ENCODE measurements at regions of chr4 and their contacts with region 1.

Region 1: GRCh38 chr4:110516106-110516922 is 40.4 kb downstream of the ENPEP start:
- DNase-seq: peak; percentile 68
- ATAC-seq: peak; percentile 100
- H3K4me3 ChIP-seq: peak overlapping the region; percentile 44 to 58 (median 50)
- H3K27ac ChIP-seq: no peak overlapping the region
- H3K4me1 ChIP-seq: peaks cover 8% of the 10 kb centered on the region; the same call in 1 of the 2 replicates
- H3K27me3 ChIP-seq: no peaks in the 10 kb centered on the region
- CTCF ChIP-seq: peak; percentile 84
- EP300 ChIP-seq: no peak
- POLR2A ChIP-seq: no peak
- RAD21 ChIP-seq: peak; percentile 53; the same call in 1 of the 2 replicates

Region 2: DNA sequence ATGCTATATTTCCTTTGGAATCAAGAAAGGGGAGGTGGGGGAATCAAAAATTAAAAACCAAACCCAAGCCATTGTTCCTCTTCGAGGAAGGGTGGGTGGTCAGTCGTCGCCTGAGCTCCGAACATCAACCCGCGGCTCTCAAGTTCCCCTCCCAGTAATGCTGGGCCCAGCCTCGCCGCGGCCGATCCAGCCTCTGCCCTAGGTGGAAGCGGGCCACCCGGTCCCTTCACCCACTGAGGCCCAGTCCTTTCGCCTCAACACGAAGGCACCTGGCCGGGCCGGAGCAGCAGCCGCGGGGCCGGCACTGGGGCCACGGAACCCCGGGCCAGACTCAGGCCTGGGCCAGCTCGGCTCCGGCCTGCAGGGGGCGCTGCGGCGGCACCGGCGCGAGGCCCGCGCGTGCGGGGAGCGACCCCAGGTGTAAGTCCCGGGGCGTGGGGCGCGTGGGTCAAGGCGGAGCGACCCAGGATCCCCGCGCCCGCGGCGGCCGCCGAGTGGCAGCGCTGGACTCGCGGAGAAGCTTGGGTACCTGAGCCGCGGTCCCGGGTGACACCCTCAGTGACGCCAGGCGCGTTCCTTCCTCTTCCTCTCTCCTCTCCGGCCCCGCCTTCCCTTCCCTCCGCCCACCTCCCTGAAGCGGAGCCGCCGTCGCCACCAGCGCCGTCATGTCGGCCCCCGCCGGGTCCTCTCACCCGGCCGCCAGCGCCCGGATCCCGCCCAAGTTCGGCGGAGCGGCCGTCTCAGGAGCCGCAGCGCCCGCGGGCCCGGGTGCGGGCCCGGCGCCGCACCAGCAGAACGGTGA is 1082.9 kb before region 1 on chr4 and contains the start of gene SEC24B:
- CTCF ChIA-PET with region 1: no interaction called
- POLR2A ChIA-PET with region 1: no interaction called
- in situ Hi-C with region 1: no loop called
- intact Hi-C with region 1: loop called (anchors 10 kb)
- DNase-seq: peak; percentile 73
- ATAC-seq: peak; percentile 92
- H3K4me3 ChIP-seq: peak within 1 kb of the TSS; percentile 81 to 93 (median 86)
- H3K27ac ChIP-seq: peak within 1 kb of the TSS; percentile 81
- H3K4me1 ChIP-seq: peaks cover 43% of the 10 kb centered on the region
- H3K27me3 ChIP-seq: no peaks in the 10 kb centered on the region; a peak in 1 of 5 replicates
- CTCF ChIP-seq: peak; percentile 73
- EP300 ChIP-seq: no peak
- POLR2A ChIP-seq: peak; percentile 69 to 77
- RAD21 ChIP-seq: peak; percentile 86
- total RNA-seq, gene SEC24B: 14.6 and 22.9 TPM in 2 replicates

Region 3: DNA sequence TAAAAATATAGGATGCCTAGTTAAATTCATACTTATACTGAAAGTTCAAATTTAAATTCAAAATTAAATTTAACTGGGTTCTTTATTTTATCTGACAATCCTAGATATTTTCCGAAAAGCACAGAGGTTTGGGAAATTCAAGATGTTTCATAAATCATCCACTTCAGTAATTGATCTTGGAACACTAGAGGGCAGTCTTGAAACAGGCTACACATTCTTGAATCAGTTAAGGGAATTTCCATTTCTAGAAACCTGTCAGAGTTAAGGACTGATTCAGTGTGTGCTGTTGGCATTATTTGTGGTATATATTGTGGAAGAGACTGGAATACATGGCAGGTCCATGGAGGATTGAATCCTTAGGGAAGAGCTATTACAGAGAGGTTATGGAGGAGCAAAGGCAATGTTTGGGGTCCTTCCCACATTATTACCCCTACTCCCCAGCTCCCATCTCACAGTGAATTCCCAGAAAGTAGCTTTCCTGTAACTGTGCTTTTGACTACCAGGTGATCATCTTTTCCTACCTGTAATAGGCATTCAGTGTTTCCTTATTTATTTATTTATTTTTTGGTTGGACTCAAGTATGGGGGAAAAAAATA is 510.8 kb before region 1 on chr4:
- CTCF ChIA-PET with region 1: interaction called, 100 read pairs
- POLR2A ChIA-PET with region 1: no interaction called
- in situ Hi-C with region 1: loop called (anchors 5 kb)
- intact Hi-C with region 1: loop called (anchors 1 kb)
- DNase-seq: peak; percentile 60
- ATAC-seq: peak; percentile 50
- H3K4me3 ChIP-seq: no peak overlapping the region
- H3K27ac ChIP-seq: no peak overlapping the region
- H3K4me1 ChIP-seq: peaks cover 29% of the 10 kb centered on the region
- H3K27me3 ChIP-seq: no peaks in the 10 kb centered on the region
- CTCF ChIP-seq: peak; percentile 77
- EP300 ChIP-seq: no peak
- POLR2A ChIP-seq: no peak
- RAD21 ChIP-seq: peak; percentile 45; the same call in 1 of the 2 replicates

Region 4: GRCh38 chr4:110310795-110311194 is 205.5 kb before region 1 on chr4:
- CTCF ChIA-PET with region 1: interaction called, 4 read pairs
- POLR2A ChIA-PET with region 1: no interaction called
- in situ Hi-C with region 1: no loop called
- intact Hi-C with region 1: loop called (anchors 1 kb)
- DNase-seq: no peak
- ATAC-seq: no peak
- H3K4me3 ChIP-seq: no peak overlapping the region
- H3K27ac ChIP-seq: no peak overlapping the region
- H3K4me1 ChIP-seq: no peaks in the 10 kb centered on the region
- H3K27me3 ChIP-seq: no peaks in the 10 kb centered on the region
- CTCF ChIP-seq: no peak
- EP300 ChIP-seq: no peak
- POLR2A ChIP-seq: no peak
- RAD21 ChIP-seq: no peak

Region 5: DNA sequence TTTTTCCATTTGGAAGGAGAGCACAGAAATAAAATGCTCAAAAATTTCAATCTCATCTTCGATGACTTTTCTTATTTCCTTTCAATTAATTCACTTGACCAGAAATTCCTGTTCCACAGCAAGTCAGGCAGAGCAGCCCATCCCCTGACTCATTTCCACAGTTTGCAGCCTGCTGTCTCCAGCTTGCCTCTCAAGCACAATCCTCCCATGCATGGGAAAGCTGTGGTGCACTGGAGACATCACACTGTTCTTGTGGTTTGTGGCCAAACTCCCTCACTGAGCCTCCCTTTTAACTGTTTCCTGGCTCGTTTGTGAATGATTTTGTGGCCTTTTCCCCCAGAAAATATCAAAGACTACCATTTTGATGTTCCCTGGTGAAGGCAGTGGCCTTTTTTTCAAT is 154.4 kb before region 1 on chr4:
- CTCF ChIA-PET with region 1: no interaction called
- POLR2A ChIA-PET with region 1: no interaction called
- in situ Hi-C with region 1: no loop called
- intact Hi-C with region 1: no loop called
- DNase-seq: no peak
- ATAC-seq: no peak
- H3K4me3 ChIP-seq: no peak overlapping the region
- H3K27ac ChIP-seq: no peak overlapping the region
- H3K4me1 ChIP-seq: no peaks in the 10 kb centered on the region
- H3K27me3 ChIP-seq: no peaks in the 10 kb centered on the region
- CTCF ChIP-seq: no peak
- EP300 ChIP-seq: no peak
- POLR2A ChIP-seq: no peak
- RAD21 ChIP-seq: no peak